CD4-positive, alpha-beta memory T cell (primary cell): ENCODE measurements at regions of chr13 and their contacts with region 1.

Region 1: GRCh38 chr13:48804821-48805601 is 151.3 kb downstream of the CYSLTR2 start:
- DNase-seq: peak in 3 of 5 donors; percentile 17 to 30 (median 23)
- H3K4me3 ChIP-seq: no peak overlapping the region
- H3K4me3 Mint-ChIP-seq: peak overlapping the region; percentile 1 to 74 (median 50)
- H3K27ac ChIP-seq: no peak overlapping the region
- H3K27ac Mint-ChIP-seq: peak overlapping the region; percentile 31 to 86 (median 81)
- H3K4me1 ChIP-seq: peaks cover 24% of the 10 kb centered on the region
- H3K4me1 Mint-ChIP-seq: peaks cover 22 to 45% (median 38%) of the 10 kb centered on the region in 4 donors
- H3K27me3 ChIP-seq: no peaks in the 10 kb centered on the region
- H3K27me3 Mint-ChIP-seq: no peaks in the 10 kb centered on the region

Region 2: DNA sequence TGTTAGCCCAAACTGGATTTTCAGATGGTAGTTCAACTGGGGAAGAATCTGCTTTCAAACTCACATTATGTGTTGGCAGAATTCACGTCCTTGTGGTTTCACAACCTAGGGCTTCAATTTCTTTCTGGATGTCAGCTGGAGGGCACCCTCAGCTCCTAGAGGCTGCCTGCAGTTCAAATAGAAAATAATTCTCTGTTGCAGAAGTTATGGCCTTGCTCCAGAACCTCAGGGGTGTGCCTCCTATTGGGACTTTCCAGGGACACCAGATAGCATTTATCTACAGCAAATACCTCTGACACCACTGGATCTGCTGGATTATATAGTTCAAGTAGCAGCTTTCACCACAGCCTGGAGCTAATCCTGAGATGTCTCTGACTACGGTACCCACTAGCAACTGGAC is 513.3 kb before region 1 on chr13:
- CTCF ChIA-PET with region 1: no interaction called
- POLR2A ChIA-PET with region 1: no interaction called
- intact Hi-C with region 1: no loop called
- DNase-seq: no peak
- H3K4me3 ChIP-seq: no peak overlapping the region
- H3K4me3 Mint-ChIP-seq: no peak overlapping the region
- H3K27ac ChIP-seq: no peak overlapping the region
- H3K27ac Mint-ChIP-seq: no peak overlapping the region
- H3K4me1 ChIP-seq: no peaks in the 10 kb centered on the region
- H3K4me1 Mint-ChIP-seq: no peaks in the 10 kb centered on the region
- H3K27me3 ChIP-seq: peaks cover 7% of the 10 kb centered on the region
- H3K27me3 Mint-ChIP-seq: peaks cover 1 to 6% of the 10 kb centered on the region in 2 donors

Region 3: GRCh38 chr13:48532256-48532505 is 272.8 kb before region 1 on chr13:
- CTCF ChIA-PET with region 1: no interaction called
- POLR2A ChIA-PET with region 1: no interaction called
- intact Hi-C with region 1: no loop called
- DNase-seq: no peak
- H3K4me3 ChIP-seq: peak overlapping the region; percentile 70 to 75
- H3K4me3 Mint-ChIP-seq: peak overlapping the region; percentile 92 to 98 (median 94)
- H3K27ac ChIP-seq: peak overlapping the region; percentile 92
- H3K27ac Mint-ChIP-seq: peak overlapping the region; percentile 97 to 99 (median 99)
- H3K4me1 ChIP-seq: peaks cover 52% of the 10 kb centered on the region
- H3K4me1 Mint-ChIP-seq: peaks cover 22 to 60% (median 36%) of the 10 kb centered on the region in 4 donors
- H3K27me3 ChIP-seq: no peaks in the 10 kb centered on the region
- H3K27me3 Mint-ChIP-seq: no peaks in the 10 kb centered on the region

Region 4: GRCh38 chr13:48786001-48786400 is 19.0 kb before region 1 on chr13:
- CTCF ChIA-PET with region 1: no interaction called
- POLR2A ChIA-PET with region 1: no interaction called
- intact Hi-C with region 1: no loop called
- DNase-seq: no peak
- H3K4me3 ChIP-seq: no peak overlapping the region
- H3K4me3 Mint-ChIP-seq: no peak overlapping the region
- H3K27ac ChIP-seq: no peak overlapping the region
- H3K27ac Mint-ChIP-seq: no peak overlapping the region
- H3K4me1 ChIP-seq: no peaks in the 10 kb centered on the region
- H3K4me1 Mint-ChIP-seq: no peaks in the 10 kb centered on the region
- H3K27me3 ChIP-seq: no peaks in the 10 kb centered on the region
- H3K27me3 Mint-ChIP-seq: peaks cover 0 to 2% of the 10 kb centered on the region in 2 donors

Region 5: GRCh38 chr13:48817166-48817802 is 12.3 kb after region 1 on chr13:
- CTCF ChIA-PET with region 1: interaction called, 3 read pairs
- POLR2A ChIA-PET with region 1: interaction called, 24 read pairs
- intact Hi-C with region 1: loop called (anchors 1 kb)
- DNase-seq: peak in 3 of 5 donors; percentile 22 to 30 (median 25)
- H3K4me3 ChIP-seq: peak overlapping the region; percentile 20 to 39
- H3K4me3 Mint-ChIP-seq: peak overlapping the region; percentile 64 to 89 (median 83)
- H3K27ac ChIP-seq: peak overlapping the region; percentile 19
- H3K27ac Mint-ChIP-seq: peak overlapping the region; percentile 9 to 94 (median 82)
- H3K4me1 ChIP-seq: peaks cover 15% of the 10 kb centered on the region
- H3K4me1 Mint-ChIP-seq: peaks cover 9 to 26% (median 16%) of the 10 kb centered on the region in 4 donors
- H3K27me3 ChIP-seq: no peaks in the 10 kb centered on the region
- H3K27me3 Mint-ChIP-seq: peaks cover 0 to 3% of the 10 kb centered on the region in 2 donors

Region 6: GRCh38 chr13:48859272-48860105 is 54.5 kb after region 1 on chr13:
- CTCF ChIA-PET with region 1: no interaction called
- POLR2A ChIA-PET with region 1: no interaction called
- intact Hi-C with region 1: no loop called
- DNase-seq: no peak
- H3K4me3 ChIP-seq: no peak overlapping the region
- H3K4me3 Mint-ChIP-seq: peak overlapping the region in 1 of 8 donors; percentile 31
- H3K27ac ChIP-seq: no peak overlapping the region
- H3K27ac Mint-ChIP-seq: peak overlapping the region in 1 of 7 donors; percentile 3
- H3K4me1 ChIP-seq: peaks cover 8% of the 10 kb centered on the region
- H3K4me1 Mint-ChIP-seq: peaks cover 10 to 18% (median 12%) of the 10 kb centered on the region in 4 donors
- H3K27me3 ChIP-seq: no peaks in the 10 kb centered on the region
- H3K27me3 Mint-ChIP-seq: no peaks in the 10 kb centered on the region